Panc1 (cell line): ENCODE measurements at regions of chr10 and their contacts with region 1.

Region 1: DNA sequence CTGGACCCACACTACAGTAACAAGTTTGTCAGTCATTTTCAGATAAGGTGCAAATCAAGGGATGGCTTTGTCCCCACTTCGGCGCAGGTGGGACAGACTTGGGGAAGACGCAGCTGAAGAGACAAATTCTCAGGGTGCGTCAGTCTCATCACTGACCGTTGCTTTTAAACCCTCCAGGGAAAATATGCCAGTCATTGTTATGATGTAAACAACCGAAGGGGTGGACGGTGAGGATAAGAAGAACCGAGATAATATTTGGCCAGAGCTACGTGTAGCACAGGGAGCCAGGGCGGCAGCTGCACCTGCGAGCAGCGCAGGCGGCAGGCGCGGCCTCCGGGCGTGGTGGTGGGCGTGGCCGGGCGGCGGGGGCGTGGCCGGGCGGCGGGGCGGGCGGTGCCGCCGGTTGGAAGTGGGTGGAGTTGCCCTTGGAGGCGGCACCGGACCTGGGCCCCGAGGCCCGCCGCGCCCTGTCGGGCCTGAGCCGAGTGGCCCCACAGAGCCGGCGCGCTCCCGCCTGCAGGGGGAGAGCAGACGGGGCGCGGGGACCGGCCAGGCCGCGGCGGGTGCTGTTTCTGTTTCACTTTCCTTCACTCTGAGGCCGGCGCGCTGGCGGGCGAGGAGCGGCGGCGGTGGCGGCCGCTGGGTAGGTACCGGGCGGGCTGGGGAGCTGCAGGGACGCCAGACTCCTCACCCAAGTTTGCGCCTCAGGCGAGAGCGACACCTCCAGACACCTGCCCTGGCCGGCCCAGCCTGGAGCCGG is at the start of gene PCGF5:
- DNase-seq: no peak
- ATAC-seq: peak; percentile 100
- H3K4me3 ChIP-seq: peak within 1 kb of the TSS; percentile 77 to 80
- H3K27ac ChIP-seq: peak within 1 kb of the TSS; percentile 72
- H3K4me1 ChIP-seq: peaks cover 18% of the 10 kb centered on the region; the same call in 1 of the 2 replicates
- H3K27me3 ChIP-seq: peaks cover 16% of the 10 kb centered on the region
- CTCF ChIP-seq: peak; percentile 30
- total RNA-seq, gene PCGF5: 23.3 TPM

Region 2: GRCh38 chr10:91197044-91197631 is 23.2 kb before region 1 on chr10:
- CTCF ChIA-PET with region 1: no interaction called
- POLR2A ChIA-PET with region 1: interaction called, 14 read pairs
- in situ Hi-C with region 1: no loop called
- intact Hi-C with region 1: no loop called
- DNase-seq: no peak
- ATAC-seq: no peak
- H3K4me3 ChIP-seq: no peak overlapping the region
- H3K27ac ChIP-seq: no peak overlapping the region
- H3K4me1 ChIP-seq: no peaks in the 10 kb centered on the region
- H3K27me3 ChIP-seq: peaks cover 6% of the 10 kb centered on the region; the same call in 1 of the 2 replicates
- CTCF ChIP-seq: no peak

Region 3: DNA sequence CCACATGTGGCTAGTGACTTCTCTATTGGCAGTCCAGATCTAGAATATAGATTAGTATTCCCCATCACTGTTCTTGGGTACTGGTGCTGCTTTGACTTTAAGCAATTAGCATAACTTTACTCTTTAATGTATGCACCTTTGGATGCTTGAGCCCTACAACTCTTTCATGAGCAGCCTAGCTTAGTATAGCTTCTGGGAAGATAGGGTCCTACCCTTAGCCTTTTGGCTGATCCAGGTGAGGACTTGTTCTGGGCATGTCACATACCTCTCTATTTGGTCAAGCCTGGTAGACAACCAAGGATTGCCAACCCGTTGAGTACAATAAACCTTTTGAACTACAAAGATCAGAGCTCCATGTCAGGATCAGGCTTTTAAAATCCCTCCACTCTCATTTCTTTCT is 17.8 kb after region 1 on chr10:
- CTCF ChIA-PET with region 1: no interaction called
- POLR2A ChIA-PET with region 1: no interaction called
- in situ Hi-C with region 1: no loop called
- intact Hi-C with region 1: no loop called
- DNase-seq: no peak
- ATAC-seq: no peak
- H3K4me3 ChIP-seq: no peak overlapping the region
- H3K27ac ChIP-seq: no peak overlapping the region
- H3K4me1 ChIP-seq: no peaks in the 10 kb centered on the region
- H3K27me3 ChIP-seq: no peaks in the 10 kb centered on the region
- CTCF ChIP-seq: no peak